MCF 10A (cell line): ENCODE measurements at regions of chr21 and their contacts with region 1.

Region 1: GRCh38 chr21:36419996-36420395 is 34.8 kb downstream of the CHAF1B start:
- DNase-seq: peak; percentile 83
- H3K4me3 Mint-ChIP-seq: no peak overlapping the region
- H3K27ac Mint-ChIP-seq: no peak overlapping the region
- H3K4me1 Mint-ChIP-seq: no peaks in the 10 kb centered on the region
- H3K27me3 Mint-ChIP-seq: no peaks in the 10 kb centered on the region
- CTCF ChIP-seq: peak; percentile 65

Region 2: GRCh38 chr21:36524477-36524876 is 104.5 kb after region 1 on chr21:
- CTCF ChIA-PET with region 1: no interaction called
- POLR2A ChIA-PET with region 1: no interaction called
- intact Hi-C with region 1: no loop called
- DNase-seq: no peak
- H3K4me3 Mint-ChIP-seq: no peak overlapping the region
- H3K27ac Mint-ChIP-seq: no peak overlapping the region
- H3K4me1 Mint-ChIP-seq: no peaks in the 10 kb centered on the region
- H3K27me3 Mint-ChIP-seq: peaks cover 39% of the 10 kb centered on the region
- CTCF ChIP-seq: no peak

Region 3: DNA sequence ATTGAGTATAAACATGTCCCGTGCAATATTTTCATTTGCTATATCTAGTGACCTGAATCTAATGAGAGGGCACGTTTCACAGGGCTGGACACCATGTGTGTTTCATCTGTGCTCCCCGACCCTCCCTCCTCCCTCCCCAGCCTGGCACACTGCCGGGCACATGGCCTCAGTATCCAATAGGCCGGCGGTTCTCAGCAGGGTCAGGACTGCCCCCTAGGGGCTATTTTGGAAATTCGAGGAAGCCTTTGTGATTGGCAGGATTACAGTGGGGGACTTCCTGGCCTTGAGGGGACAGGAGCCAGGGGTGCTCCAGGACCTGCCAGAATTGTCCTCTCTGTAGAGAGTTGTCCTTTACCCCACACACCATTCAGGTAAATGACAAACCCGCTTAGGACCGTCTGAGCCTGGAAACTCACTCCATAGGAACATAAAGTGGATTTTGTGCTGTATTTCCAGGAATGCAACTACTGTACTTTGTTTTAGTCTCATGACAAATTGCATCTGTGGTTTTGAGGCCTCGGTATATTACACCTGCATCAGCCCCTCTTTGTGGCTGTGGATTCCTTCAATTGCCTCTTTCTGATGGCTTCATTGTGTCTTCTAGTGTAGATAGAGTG is 169.5 kb after region 1 on chr21:
- CTCF ChIA-PET with region 1: interaction called, 4 read pairs
- POLR2A ChIA-PET with region 1: no interaction called
- intact Hi-C with region 1: loop called (anchors 1 kb)
- DNase-seq: peak; percentile 61
- H3K4me3 Mint-ChIP-seq: no peak overlapping the region
- H3K27ac Mint-ChIP-seq: no peak overlapping the region
- H3K4me1 Mint-ChIP-seq: peaks cover 6% of the 10 kb centered on the region
- H3K27me3 Mint-ChIP-seq: peaks cover 12% of the 10 kb centered on the region
- CTCF ChIP-seq: peak; percentile 66

Region 4: GRCh38 chr21:36816561-36817130 is 396.6 kb after region 1 on chr21:
- CTCF ChIA-PET with region 1: no interaction called
- POLR2A ChIA-PET with region 1: no interaction called
- intact Hi-C with region 1: no loop called
- DNase-seq: no peak
- H3K4me3 Mint-ChIP-seq: no peak overlapping the region
- H3K27ac Mint-ChIP-seq: no peak overlapping the region
- H3K4me1 Mint-ChIP-seq: no peaks in the 10 kb centered on the region
- H3K27me3 Mint-ChIP-seq: no peaks in the 10 kb centered on the region
- CTCF ChIP-seq: no peak

Region 5: DNA sequence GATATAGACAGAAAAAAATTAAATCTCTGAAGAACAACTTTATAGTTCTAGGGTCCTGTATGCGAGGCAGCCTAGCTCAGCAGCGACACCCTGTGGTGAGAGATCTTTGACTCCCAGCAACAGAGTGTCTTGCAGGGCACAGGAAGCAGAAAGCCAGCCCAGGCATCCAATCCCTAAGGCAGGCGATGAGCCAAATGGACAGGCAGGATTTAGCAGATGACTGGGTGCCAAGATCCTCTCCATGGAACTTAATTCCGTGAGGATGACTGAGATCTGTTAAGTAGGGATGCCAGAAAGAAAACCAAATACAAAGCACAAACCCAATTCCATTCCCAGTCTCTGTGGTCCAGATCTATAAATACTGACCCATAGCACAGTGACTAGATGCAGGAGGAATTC is 507.7 kb after region 1 on chr21:
- CTCF ChIA-PET with region 1: interaction called, 5 read pairs
- POLR2A ChIA-PET with region 1: no interaction called
- intact Hi-C with region 1: loop called (anchors 1 kb)
- DNase-seq: peak; percentile 85
- H3K4me3 Mint-ChIP-seq: no peak overlapping the region
- H3K27ac Mint-ChIP-seq: no peak overlapping the region
- H3K4me1 Mint-ChIP-seq: peaks cover 8% of the 10 kb centered on the region
- H3K27me3 Mint-ChIP-seq: no peaks in the 10 kb centered on the region
- CTCF ChIP-seq: peak; percentile 79